Activated naive CD4-positive, alpha-beta T cell treated with anti-CD3 and anti-CD28 coated beads for 36 hours (primary cell): ENCODE measurements at regions of chr13 and their contacts with region 1.

Region 1: GRCh38 chr13:80113714-80114454 is 227.0 kb downstream of the SPRY2 start:
- DNase-seq: no peak
- H3K4me3 Mint-ChIP-seq: no peak overlapping the region
- H3K27ac Mint-ChIP-seq: no peak overlapping the region
- H3K4me1 Mint-ChIP-seq: no peaks in the 10 kb centered on the region
- H3K27me3 Mint-ChIP-seq: no peaks in the 10 kb centered on the region

Region 2: DNA sequence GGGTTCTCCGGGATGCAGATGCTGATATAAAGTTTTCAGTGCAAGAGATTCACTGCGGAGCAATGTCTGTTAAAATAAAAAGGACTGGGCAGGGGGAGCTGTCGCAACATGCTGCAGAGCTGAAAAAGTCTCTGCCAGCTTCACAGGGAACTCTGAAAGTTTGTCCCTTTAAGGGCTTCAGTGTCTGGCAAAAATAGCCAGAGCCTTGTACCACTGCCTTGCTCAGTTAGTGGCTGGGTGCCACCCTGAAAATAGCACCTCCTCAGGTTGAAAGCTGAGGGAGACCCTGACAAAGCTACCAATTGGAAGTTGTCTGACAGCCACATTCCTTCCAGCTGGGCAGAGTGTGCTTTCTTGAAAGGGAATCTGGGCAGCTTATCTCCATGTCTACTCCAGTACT is 635.9 kb before region 1 on chr13:
- CTCF ChIA-PET with region 1: no interaction called
- intact Hi-C with region 1: no loop called
- DNase-seq: no peak
- H3K4me3 Mint-ChIP-seq: no peak overlapping the region
- H3K27ac Mint-ChIP-seq: no peak overlapping the region
- H3K4me1 Mint-ChIP-seq: peaks cover 20% of the 10 kb centered on the region
- H3K27me3 Mint-ChIP-seq: no peaks in the 10 kb centered on the region

Region 3: GRCh38 chr13:80048802-80049201 is 65.1 kb before region 1 on chr13:
- CTCF ChIA-PET with region 1: no interaction called
- intact Hi-C with region 1: loop called (anchors 2 kb)
- DNase-seq: peak; percentile 81
- H3K4me3 Mint-ChIP-seq: no peak overlapping the region
- H3K27ac Mint-ChIP-seq: no peak overlapping the region
- H3K4me1 Mint-ChIP-seq: peaks cover 10% of the 10 kb centered on the region
- H3K27me3 Mint-ChIP-seq: peaks cover 5% of the 10 kb centered on the region

Region 4: GRCh38 chr13:80379245-80379644 is 265.4 kb after region 1 on chr13:
- CTCF ChIA-PET with region 1: no interaction called
- intact Hi-C with region 1: no loop called
- DNase-seq: no peak
- H3K4me3 Mint-ChIP-seq: no peak overlapping the region
- H3K27ac Mint-ChIP-seq: no peak overlapping the region
- H3K4me1 Mint-ChIP-seq: no peaks in the 10 kb centered on the region
- H3K27me3 Mint-ChIP-seq: no peaks in the 10 kb centered on the region